ENCODE measurements at regions of chr1 and their contacts with region 1.

Region 1: GRCh38 chr1:217432339-217432738 is 198.6 kb downstream of the GPATCH2 start:
- DNase-seq: no peak
- H3K4me3 ChIP-seq: no peak overlapping the region
- H3K27ac ChIP-seq: no peak overlapping the region
- H3K4me1 ChIP-seq: no peaks in the 10 kb centered on the region
- H3K27me3 ChIP-seq: no peaks in the 10 kb centered on the region
- CTCF ChIP-seq: no peak

Region 2: GRCh38 chr1:216670118-216670900 is 762.0 kb before region 1 on chr1:
- CTCF ChIA-PET with region 1: no interaction called
- POLR2A ChIA-PET with region 1: no interaction called
- intact Hi-C with region 1: no loop called
- DNase-seq: peak; percentile 6
- H3K4me3 ChIP-seq: no peak overlapping the region
- H3K27ac ChIP-seq: no peak overlapping the region
- H3K4me1 ChIP-seq: no peaks in the 10 kb centered on the region
- H3K27me3 ChIP-seq: peaks cover 3% of the 10 kb centered on the region
- CTCF ChIP-seq: no peak

Region 3: GRCh38 chr1:217191441-217191840 is 240.9 kb before region 1 on chr1:
- CTCF ChIA-PET with region 1: no interaction called
- POLR2A ChIA-PET with region 1: no interaction called
- intact Hi-C with region 1: no loop called
- DNase-seq: no peak
- H3K4me3 ChIP-seq: no peak overlapping the region
- H3K27ac ChIP-seq: no peak overlapping the region
- H3K4me1 ChIP-seq: no peaks in the 10 kb centered on the region
- H3K27me3 ChIP-seq: no peaks in the 10 kb centered on the region
- CTCF ChIP-seq: no peak

Region 4: DNA sequence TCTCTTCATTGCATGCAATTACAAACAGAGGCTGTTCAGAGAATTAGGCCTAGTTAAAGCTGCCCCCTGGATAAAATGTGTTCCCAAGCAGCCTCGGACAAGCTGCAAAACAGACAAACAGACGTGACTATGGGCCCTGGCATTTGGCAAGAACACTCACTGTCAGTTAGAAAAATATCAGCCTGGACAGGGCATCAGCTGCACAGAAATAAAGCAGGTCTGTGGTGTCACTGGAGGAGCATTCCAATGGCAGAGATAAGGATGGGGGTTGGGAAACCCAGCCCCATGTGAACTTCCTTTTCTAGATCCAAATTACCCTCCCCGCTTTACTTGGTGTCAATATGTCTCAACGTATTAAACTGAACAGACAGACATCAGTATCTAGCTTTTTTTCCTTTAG is 21.5 kb after region 1 on chr1:
- CTCF ChIA-PET with region 1: no interaction called
- POLR2A ChIA-PET with region 1: no interaction called
- intact Hi-C with region 1: loop called (anchors 2 kb)
- DNase-seq: no peak
- H3K4me3 ChIP-seq: no peak overlapping the region
- H3K27ac ChIP-seq: no peak overlapping the region
- H3K4me1 ChIP-seq: no peaks in the 10 kb centered on the region
- H3K27me3 ChIP-seq: no peaks in the 10 kb centered on the region
- CTCF ChIP-seq: no peak

Region 5: GRCh38 chr1:217562229-217562878 is 130.0 kb after region 1 on chr1:
- CTCF ChIA-PET with region 1: no interaction called
- POLR2A ChIA-PET with region 1: no interaction called
- intact Hi-C with region 1: no loop called
- DNase-seq: peak; percentile 1
- H3K4me3 ChIP-seq: no peak overlapping the region
- H3K27ac ChIP-seq: no peak overlapping the region
- H3K4me1 ChIP-seq: no peaks in the 10 kb centered on the region
- H3K27me3 ChIP-seq: no peaks in the 10 kb centered on the region
- CTCF ChIP-seq: no peak

Region 6: GRCh38 chr1:217791091-217791490 is 358.8 kb after region 1 on chr1:
- CTCF ChIA-PET with region 1: no interaction called
- POLR2A ChIA-PET with region 1: no interaction called
- intact Hi-C with region 1: no loop called
- DNase-seq: no peak
- H3K4me3 ChIP-seq: no peak overlapping the region
- H3K27ac ChIP-seq: no peak overlapping the region
- H3K4me1 ChIP-seq: no peaks in the 10 kb centered on the region
- H3K27me3 ChIP-seq: no peaks in the 10 kb centered on the region
- CTCF ChIP-seq: no peak